ENCODE measurements at regions of chr6 and their contacts with region 1.

Region 1: DNA sequence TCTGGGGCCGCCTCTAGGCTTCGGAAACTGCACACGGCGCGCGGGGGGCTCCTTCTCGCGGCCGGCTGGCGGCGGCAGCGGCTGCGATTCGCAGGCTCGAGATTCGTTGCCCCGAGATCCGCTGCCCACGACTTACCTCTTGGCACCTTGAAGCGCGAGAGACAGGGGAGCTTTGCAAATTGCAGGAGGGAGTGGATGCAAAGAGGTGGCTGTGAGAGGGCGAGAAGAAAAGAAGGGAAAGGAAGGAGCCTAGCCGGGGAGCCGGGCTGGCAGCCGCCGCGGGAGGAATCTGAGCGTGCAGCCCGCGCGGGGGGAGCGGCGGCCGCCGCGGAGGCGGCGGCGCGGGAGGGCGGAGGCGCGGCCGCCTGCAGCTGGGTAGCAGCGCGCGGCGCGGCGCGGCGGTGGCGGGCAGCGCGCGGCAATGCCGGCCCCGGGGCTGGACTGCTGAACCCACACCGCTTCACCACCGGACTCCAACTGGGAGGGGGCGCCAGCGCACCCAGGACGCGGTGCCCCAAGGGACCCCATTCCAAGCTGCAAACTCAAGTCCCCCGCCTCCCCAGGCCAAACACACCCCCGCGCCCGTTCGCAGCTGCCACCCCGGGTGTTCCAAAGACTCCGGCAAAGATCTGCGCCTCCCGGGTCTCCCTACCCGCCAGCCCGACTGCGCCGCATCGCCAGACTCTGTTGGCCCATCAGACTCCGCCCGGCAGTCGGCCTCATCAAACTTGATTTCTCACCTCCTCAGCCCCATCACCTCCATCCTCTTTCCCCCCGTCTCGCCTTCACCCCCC is 44.2 kb upstream of the SUPT3H start:
- DNase-seq: peak; percentile 78
- H3K4me3 ChIP-seq: peak overlapping the region; percentile 51 to 70 (median 60)
- H3K27ac ChIP-seq: peak overlapping the region; percentile 34 to 80 (median 76)
- H3K4me1 ChIP-seq: peaks cover 0 to 50% (median 40%) of the 10 kb centered on the region in 4 donors
- H3K27me3 ChIP-seq: peaks cover 8 to 47% (median 18%) of the 10 kb centered on the region in 3 donors
- CTCF ChIP-seq: peak in 1 of 4 experiments; percentile 37
- EP300 ChIP-seq: no peak
- POLR2A ChIP-seq: no peak

Region 2: GRCh38 chr6:44475779-44476434 is 946.0 kb before region 1 on chr6:
- intact Hi-C with region 1: loop called (anchors 5 kb)
- DNase-seq: peak; percentile 88
- H3K4me3 ChIP-seq: no peak overlapping the region
- H3K27ac ChIP-seq: peak overlapping the region in 1 of 4 donors; percentile 25
- H3K4me1 ChIP-seq: peaks cover 0 to 14% (median 8%) of the 10 kb centered on the region in 4 donors
- H3K27me3 ChIP-seq: peaks cover 0 to 12% (median 0%) of the 10 kb centered on the region in 3 donors
- CTCF ChIP-seq: peak; percentile 76 to 92 (median 89)
- EP300 ChIP-seq: no peak
- POLR2A ChIP-seq: no peak

Region 3: DNA sequence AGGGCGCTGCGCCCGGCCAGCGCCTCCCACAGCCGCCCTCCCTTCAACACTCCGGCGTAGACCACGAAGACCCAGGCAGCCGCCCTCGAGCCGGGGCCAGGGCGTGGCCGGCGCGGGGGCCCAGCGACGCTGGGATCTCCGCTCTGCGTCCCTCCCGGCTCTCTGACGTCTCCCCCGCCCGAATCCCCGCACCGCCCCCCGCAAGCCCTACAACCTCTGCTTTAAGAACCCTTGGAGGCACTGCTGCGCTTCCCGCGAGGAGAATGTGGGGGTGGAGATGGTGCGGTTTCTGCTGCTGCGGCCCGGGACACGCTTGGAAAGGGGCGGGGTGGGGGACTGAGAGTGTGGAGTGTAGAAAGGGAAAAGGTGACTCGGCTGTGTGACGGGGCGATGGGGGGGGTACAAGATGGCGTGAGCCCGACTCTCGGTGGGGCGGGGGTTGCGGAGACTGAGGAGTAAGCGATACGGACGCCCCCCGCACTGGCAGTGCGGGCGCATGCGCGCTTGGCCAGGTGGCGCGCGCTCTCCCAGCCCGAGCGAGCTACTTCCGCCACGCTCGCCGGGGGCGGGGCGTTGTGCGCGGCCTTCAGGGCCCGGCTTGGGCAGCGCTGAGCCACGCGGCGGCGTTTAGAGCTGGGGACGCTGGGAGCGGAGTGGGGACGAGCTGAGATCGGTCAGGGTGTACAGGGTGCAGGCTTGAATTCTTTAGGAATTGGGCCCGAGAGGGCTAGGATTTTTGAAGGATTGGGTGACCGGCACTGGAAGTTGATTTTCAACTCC is 44.2 kb before region 1 on chr6 and contains the start of gene SUPT3H:
- intact Hi-C with region 1: loop called (anchors 1 kb)
- DNase-seq: peak; percentile 96
- H3K4me3 ChIP-seq: peak within 1 kb of the TSS; percentile 79 to 90 (median 86)
- H3K27ac ChIP-seq: peak within 1 kb of the TSS; percentile 97
- H3K4me1 ChIP-seq: peaks cover 0 to 17% (median 8%) of the 10 kb centered on the region in 4 donors
- H3K27me3 ChIP-seq: no peaks in the 10 kb centered on the region
- CTCF ChIP-seq: peak in 1 of 4 experiments; percentile 8
- EP300 ChIP-seq: no peak
- POLR2A ChIP-seq: peak; percentile 34 to 61
- total RNA-seq, gene SUPT3H: 10.6 to 18.2 (median 13.0) TPM

Region 4: DNA sequence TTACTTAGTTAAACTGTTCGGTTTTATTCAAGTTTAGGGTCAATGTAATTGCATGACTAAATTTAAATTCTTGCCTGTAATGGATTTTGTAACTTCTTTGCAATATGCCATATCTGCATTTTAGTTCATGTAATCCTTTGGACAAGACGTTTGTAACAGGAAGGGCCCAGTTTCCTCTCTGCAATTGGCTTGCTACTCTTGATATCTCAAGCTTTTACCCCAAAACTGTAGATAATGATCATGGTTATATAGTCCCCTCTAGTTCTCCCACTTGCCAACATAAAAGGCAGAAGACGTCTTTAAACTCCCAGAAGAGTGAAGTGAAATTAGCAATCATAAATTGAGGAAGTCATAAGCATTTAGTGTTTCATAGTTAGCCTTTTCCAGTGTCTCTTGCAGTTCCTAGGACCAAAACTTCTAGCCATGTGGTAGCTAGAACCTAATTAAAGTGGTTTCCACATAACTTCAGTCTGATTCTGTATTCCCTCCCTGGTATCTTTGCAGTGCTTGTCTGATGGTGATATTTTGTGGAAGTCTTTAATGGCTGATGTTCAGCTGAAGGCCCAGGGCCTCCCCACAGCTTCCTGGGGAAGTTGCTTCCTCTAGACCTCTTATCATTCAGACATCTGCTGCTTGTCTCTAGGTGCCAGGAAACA is 73.7 kb after region 1 on chr6:
- intact Hi-C with region 1: no loop called
- DNase-seq: no peak
- H3K4me3 ChIP-seq: no peak overlapping the region
- H3K27ac ChIP-seq: no peak overlapping the region
- H3K4me1 ChIP-seq: peaks cover 0 to 7% (median 0%) of the 10 kb centered on the region in 4 donors
- H3K27me3 ChIP-seq: no peaks in the 10 kb centered on the region
- CTCF ChIP-seq: no peak
- EP300 ChIP-seq: no peak
- POLR2A ChIP-seq: no peak

Region 5: GRCh38 chr6:45590225-45590624 is 168.3 kb after region 1 on chr6:
- intact Hi-C with region 1: loop called (anchors 5 kb)
- DNase-seq: no peak
- H3K4me3 ChIP-seq: no peak overlapping the region
- H3K27ac ChIP-seq: peak overlapping the region; percentile 21 to 85 (median 78)
- H3K4me1 ChIP-seq: peaks cover 0 to 40% (median 32%) of the 10 kb centered on the region in 4 donors
- H3K27me3 ChIP-seq: no peaks in the 10 kb centered on the region
- CTCF ChIP-seq: no peak
- EP300 ChIP-seq: peak; percentile 52 to 87 (median 72)
- POLR2A ChIP-seq: no peak

Region 6: DNA sequence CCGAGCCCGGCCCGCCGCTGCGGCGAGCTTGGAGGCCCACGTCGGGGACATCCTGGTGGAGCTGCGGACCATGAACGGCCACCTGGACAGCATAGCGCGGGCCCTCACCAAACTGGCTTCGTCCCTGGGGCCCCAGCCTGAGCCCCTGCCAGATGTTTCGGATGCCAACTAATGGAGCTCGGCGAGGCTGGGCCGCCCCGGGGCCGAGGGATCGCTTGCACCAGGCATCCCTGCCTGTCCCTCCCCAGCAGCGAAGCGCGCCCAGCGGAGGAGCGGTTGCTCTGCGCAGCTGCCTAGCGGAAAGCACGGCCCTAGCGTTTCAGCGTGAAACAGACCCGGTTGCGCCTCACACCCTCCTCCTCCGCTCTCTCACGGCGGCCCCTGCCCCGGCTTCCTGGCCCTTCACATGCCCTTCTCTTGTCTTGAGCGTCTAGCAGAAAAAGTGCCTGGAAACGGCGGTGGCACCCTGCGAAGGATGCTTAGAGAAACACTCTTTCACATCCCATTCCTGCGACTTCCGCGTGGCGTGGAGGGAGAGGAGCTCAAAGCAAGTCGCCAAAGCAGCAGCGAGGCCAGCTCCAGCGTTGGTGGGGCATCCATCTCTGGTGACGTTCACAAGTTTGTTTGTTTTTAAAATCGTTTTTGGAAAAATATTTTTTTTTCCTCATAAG is 241.8 kb after region 1 on chr6:
- intact Hi-C with region 1: loop called (anchors 5 kb)
- DNase-seq: no peak
- H3K4me3 ChIP-seq: peak overlapping the region in 3 of 4 donors; percentile 12 to 40 (median 38)
- H3K27ac ChIP-seq: no peak overlapping the region
- H3K4me1 ChIP-seq: peaks cover 0 to 14% (median 12%) of the 10 kb centered on the region in 4 donors
- H3K27me3 ChIP-seq: peaks cover 0 to 11% (median 0%) of the 10 kb centered on the region in 3 donors
- CTCF ChIP-seq: peak in 1 of 4 experiments; percentile 21
- EP300 ChIP-seq: no peak
- POLR2A ChIP-seq: no peak

Measured in sigmoid colon (tissue), 7 donors.